ENCODE measurements at regions of chr2 and their contacts with region 1.

Region 1: DNA sequence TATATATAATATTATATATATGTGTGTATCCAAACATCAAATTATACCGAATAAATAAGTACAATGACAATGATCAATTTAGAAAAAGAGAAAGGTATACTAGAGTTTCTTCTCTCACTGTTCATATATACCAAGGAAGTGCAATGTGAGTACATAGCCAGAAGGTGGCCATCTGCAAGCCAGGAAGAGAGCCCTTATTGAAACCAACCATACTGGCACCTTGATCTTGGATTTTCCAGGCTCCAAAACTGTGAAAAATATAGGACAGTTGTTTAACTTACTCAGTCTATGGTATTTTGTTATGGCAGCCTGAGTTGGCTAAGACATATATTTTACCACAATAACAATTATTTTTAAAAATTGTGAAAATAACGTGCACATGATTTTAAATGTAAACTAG is 1490.2 kb upstream of the SLC39A10 start:
- DNase-seq: no peak
- ATAC-seq: peak; percentile 67
- H3K4me3 ChIP-seq: no peak overlapping the region
- H3K27ac ChIP-seq: no peak overlapping the region
- H3K4me1 ChIP-seq: no peaks in the 10 kb centered on the region
- H3K27me3 ChIP-seq: no peaks in the 10 kb centered on the region
- CTCF ChIP-seq: peak; percentile 46 to 60 (median 48)
- EP300 ChIP-seq: no peak
- POLR2A ChIP-seq: no peak
- RAD21 ChIP-seq: peak; percentile 70

Region 2: GRCh38 chr2:194819344-194819743 is 652.5 kb after region 1 on chr2:
- CTCF ChIA-PET with region 1: no interaction called
- POLR2A ChIA-PET with region 1: no interaction called
- RAD21 ChIA-PET with region 1: no interaction called
- SMC1A ChIA-PET with region 1: no interaction called
- in situ Hi-C with region 1: no loop called
- intact Hi-C with region 1: loop called (anchors 5 kb)
- DNase-seq: no peak
- ATAC-seq: peak; percentile 33; the same call in 2 of the 3 replicates
- H3K4me3 ChIP-seq: no peak overlapping the region
- H3K27ac ChIP-seq: no peak overlapping the region
- H3K4me1 ChIP-seq: no peaks in the 10 kb centered on the region
- H3K27me3 ChIP-seq: no peaks in the 10 kb centered on the region
- CTCF ChIP-seq: no peak; a peak in 1 of 6 replicates
- EP300 ChIP-seq: no peak
- POLR2A ChIP-seq: no peak
- RAD21 ChIP-seq: peak; percentile 54; the same call in 1 of the 2 replicates

Measured in GM12878 (cell line).